ENCODE measurements at regions of chr7 and their contacts with region 1.

Region 1: GRCh38 chr7:120877701-120878100 is 19.8 kb upstream of the TSPAN12 start:
- DNase-seq: no peak
- ATAC-seq: no peak
- H3K4me3 ChIP-seq: no peak overlapping the region
- H3K27ac ChIP-seq: no peak overlapping the region
- H3K4me1 ChIP-seq: no peaks in the 10 kb centered on the region
- H3K27me3 ChIP-seq: no peaks in the 10 kb centered on the region
- CTCF ChIP-seq: no peak
- EP300 ChIP-seq: no peak
- POLR2A ChIP-seq: no peak
- RAD21 ChIP-seq: no peak

Region 2: GRCh38 chr7:120898715-120899499 is 21.2 kb after region 1 on chr7:
- CTCF ChIA-PET with region 1: interaction called, 6 read pairs
- POLR2A ChIA-PET with region 1: interaction called, 5 read pairs
- RAD21 ChIA-PET with region 1: interaction called, 3 read pairs
- SMC1A ChIA-PET with region 1: interaction called, 13 read pairs
- in situ Hi-C with region 1: no loop called
- intact Hi-C with region 1: no loop called
- DNase-seq: no peak
- ATAC-seq: peak; percentile 95
- H3K4me3 ChIP-seq: no peak overlapping the region
- H3K27ac ChIP-seq: no peak overlapping the region
- H3K4me1 ChIP-seq: no peaks in the 10 kb centered on the region
- H3K27me3 ChIP-seq: no peaks in the 10 kb centered on the region
- CTCF ChIP-seq: no peak; a peak in 1 of 6 replicates
- EP300 ChIP-seq: no peak; a peak in 1 of 4 replicates
- POLR2A ChIP-seq: no peak
- RAD21 ChIP-seq: no peak

Region 3: GRCh38 chr7:121624958-121625357 is 747.3 kb after region 1 on chr7:
- CTCF ChIA-PET with region 1: no interaction called
- POLR2A ChIA-PET with region 1: no interaction called
- RAD21 ChIA-PET with region 1: no interaction called
- SMC1A ChIA-PET with region 1: no interaction called
- in situ Hi-C with region 1: no loop called
- intact Hi-C with region 1: no loop called
- DNase-seq: no peak
- ATAC-seq: no peak
- H3K4me3 ChIP-seq: no peak overlapping the region
- H3K27ac ChIP-seq: no peak overlapping the region
- H3K4me1 ChIP-seq: no peaks in the 10 kb centered on the region
- H3K27me3 ChIP-seq: no peaks in the 10 kb centered on the region
- CTCF ChIP-seq: no peak
- EP300 ChIP-seq: no peak
- POLR2A ChIP-seq: no peak
- RAD21 ChIP-seq: no peak

Measured in GM12878 (cell line).